ENCODE measurements at regions of chr2 and their contacts with region 1.

Region 1: GRCh38 chr2:219459460-219460311 is 25.0 kb downstream of the SPEG start:
- DNase-seq: peak; percentile 31
- H3K4me3 ChIP-seq: no peak overlapping the region
- H3K27ac ChIP-seq: peak overlapping the region; percentile 54 to 65
- H3K4me1 ChIP-seq: no peaks in the 10 kb centered on the region
- H3K27me3 ChIP-seq: no peaks in the 10 kb centered on the region
- CTCF ChIP-seq: peak; percentile 48 to 89 (median 70)
- POLR2A ChIP-seq: no peak

Region 2: DNA sequence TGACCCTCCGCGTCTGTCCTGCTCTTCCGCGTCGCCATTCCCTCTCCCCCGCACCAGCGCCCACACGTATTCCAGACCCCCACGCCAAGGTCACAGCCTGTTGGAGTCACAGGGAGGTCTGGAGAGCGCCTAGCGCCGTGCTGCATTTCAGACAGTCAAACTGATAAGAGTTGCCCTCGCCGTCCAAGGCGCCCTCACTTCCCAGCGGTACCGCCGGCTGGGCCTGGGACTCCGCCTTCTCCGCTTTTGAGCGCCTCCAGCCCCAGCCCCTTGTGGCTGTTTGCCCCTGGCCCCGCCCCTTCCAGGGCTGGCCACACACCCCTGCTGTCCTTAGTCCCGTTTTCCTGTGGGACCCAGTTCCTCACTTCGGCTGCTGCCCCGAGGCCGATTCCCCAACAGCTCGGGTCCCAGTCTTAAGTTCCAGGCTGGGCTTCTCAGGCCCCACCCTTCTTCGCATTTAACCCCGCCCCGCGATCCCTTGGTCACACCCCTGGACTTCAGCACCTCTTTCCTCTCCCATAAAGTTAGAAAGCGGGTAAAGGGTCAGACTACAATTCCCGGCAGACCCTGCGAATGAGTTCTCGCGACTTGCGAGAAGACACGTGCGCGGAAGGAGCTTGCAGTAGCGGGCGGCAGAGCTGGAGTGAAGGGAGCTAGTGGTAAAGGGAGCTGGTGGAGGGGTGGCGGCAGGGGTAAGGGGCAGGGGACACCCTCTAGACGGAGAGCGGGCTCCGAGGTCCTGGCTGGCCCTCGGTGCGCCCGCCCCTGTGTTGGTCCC is 38.8 kb after region 1 on chr2 and contains the start of gene GMPPA:
- intact Hi-C with region 1: loop called (anchors 5 kb)
- DNase-seq: peak; percentile 97
- H3K4me3 ChIP-seq: peak within 1 kb of the TSS; percentile 64 to 73
- H3K27ac ChIP-seq: peak within 1 kb of the TSS; percentile 90 to 95
- H3K4me1 ChIP-seq: peaks cover 12% of the 10 kb centered on the region
- H3K27me3 ChIP-seq: no peaks in the 10 kb centered on the region
- CTCF ChIP-seq: peak in 1 of 4 experiments; percentile 17
- POLR2A ChIP-seq: peak; percentile 82
- total RNA-seq, gene GMPPA: 41.2 to 53.8 TPM